HCT116 (cell line): ENCODE measurements at regions of chr5 and their contacts with region 1.

Region 1: GRCh38 chr5:154972476-154973080 is 31.7 kb downstream of the MRPL22 start:
- DNase-seq: peak; percentile 35
- ATAC-seq: peak; percentile 82
- H3K4me3 ChIP-seq: no peak overlapping the region
- H3K27ac ChIP-seq: no peak overlapping the region
- H3K4me1 ChIP-seq: no peaks in the 10 kb centered on the region
- H3K27me3 ChIP-seq: no peaks in the 10 kb centered on the region
- CTCF ChIP-seq: peak; percentile 64 to 73 (median 64); a peak in 5 of 6 replicates
- POLR2A ChIP-seq: no peak
- RAD21 ChIP-seq: peak; percentile 76

Region 2: DNA sequence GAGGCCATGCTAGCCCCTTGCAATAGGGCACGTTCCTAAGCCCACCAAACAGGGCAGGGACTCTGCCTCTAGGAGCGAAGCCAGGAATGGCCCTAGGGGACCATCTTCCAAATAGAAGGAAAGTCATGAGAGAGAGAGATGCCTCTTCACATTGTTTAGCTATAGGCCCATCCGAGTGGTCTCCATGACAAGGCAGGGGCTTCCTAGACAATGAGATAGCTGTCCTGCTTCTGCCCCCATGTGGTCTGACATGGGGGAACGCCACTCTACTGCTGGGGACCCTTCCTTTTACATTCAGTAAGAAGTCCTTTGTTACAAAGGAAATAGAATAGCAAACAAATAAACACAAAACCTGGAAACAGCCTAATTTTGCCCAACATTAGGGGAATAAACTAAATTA is 23.1 kb after region 1 on chr5:
- CTCF ChIA-PET with region 1: interaction called, 13 read pairs
- POLR2A ChIA-PET with region 1: no interaction called
- RAD21 ChIA-PET with region 1: no interaction called
- intact Hi-C with region 1: no loop called
- DNase-seq: no peak
- ATAC-seq: no peak
- H3K4me3 ChIP-seq: no peak overlapping the region
- H3K27ac ChIP-seq: no peak overlapping the region
- H3K4me1 ChIP-seq: peaks cover 0 to 10% of the 10 kb centered on the region in 2 experiments; a peak in 1 of 4 replicates
- H3K27me3 ChIP-seq: no peaks in the 10 kb centered on the region
- CTCF ChIP-seq: peak in 2 of 3 experiments; percentile 26; a peak in 2 of 6 replicates
- POLR2A ChIP-seq: no peak
- RAD21 ChIP-seq: no peak

Region 3: DNA sequence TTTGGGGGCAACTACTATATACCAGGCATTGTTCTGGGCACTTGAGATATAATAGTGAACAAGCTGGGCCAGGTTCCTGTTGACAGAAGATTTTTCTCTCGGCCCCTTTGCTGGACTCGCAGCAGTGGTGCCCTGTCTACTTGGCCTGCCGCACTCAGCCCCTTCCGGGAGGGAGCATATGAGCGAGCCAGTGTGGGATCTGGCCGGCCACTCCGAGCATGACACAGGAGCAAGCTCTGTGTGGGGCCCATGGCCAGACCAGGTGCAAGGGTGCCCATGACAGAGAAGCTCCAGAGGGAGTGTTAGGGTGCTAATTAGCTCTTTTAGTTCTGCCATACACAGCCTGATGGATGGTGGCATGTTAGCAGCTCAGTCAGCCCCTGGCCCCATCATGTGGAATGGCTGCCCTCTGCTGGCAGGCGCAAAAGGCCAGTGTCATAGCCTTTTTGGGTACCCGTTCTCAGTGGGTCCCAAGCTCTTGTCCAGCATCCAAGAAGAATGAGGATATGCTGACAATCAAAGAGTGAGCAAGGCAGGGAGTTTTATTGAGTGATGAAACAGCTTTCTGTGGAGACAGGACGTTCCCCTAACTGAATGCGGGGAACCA is 31.7 kb after region 1 on chr5:
- CTCF ChIA-PET with region 1: interaction called, 36 read pairs
- POLR2A ChIA-PET with region 1: interaction called, 4 read pairs
- RAD21 ChIA-PET with region 1: interaction called, 5 to 8 read pairs
- intact Hi-C with region 1: loop called (anchors 1 kb)
- DNase-seq: peak; percentile 31
- ATAC-seq: peak; percentile 89
- H3K4me3 ChIP-seq: no peak overlapping the region
- H3K27ac ChIP-seq: no peak overlapping the region
- H3K4me1 ChIP-seq: peaks cover 4 to 18% of the 10 kb centered on the region in 2 experiments; a peak in 2 of 4 replicates
- H3K27me3 ChIP-seq: no peaks in the 10 kb centered on the region
- CTCF ChIP-seq: peak; percentile 69 to 81 (median 75)
- POLR2A ChIP-seq: no peak
- RAD21 ChIP-seq: peak; percentile 90

Region 4: GRCh38 chr5:155027993-155028629 is 55.5 kb after region 1 on chr5:
- CTCF ChIA-PET with region 1: interaction called, 38 read pairs
- POLR2A ChIA-PET with region 1: no interaction called
- RAD21 ChIA-PET with region 1: interaction called in 1 of 2 experiments, 3 read pairs
- intact Hi-C with region 1: loop called (anchors 1 kb)
- DNase-seq: peak; percentile 27
- ATAC-seq: peak; percentile 96
- H3K4me3 ChIP-seq: no peak overlapping the region
- H3K27ac ChIP-seq: no peak overlapping the region
- H3K4me1 ChIP-seq: no peaks in the 10 kb centered on the region
- H3K27me3 ChIP-seq: no peaks in the 10 kb centered on the region; the same call in 1 of the 2 replicates
- CTCF ChIP-seq: peak; percentile 52 to 56 (median 54); a peak in 5 of 6 replicates
- POLR2A ChIP-seq: no peak
- RAD21 ChIP-seq: peak; percentile 78

Region 5: GRCh38 chr5:155728146-155728856 is 755.7 kb after region 1 on chr5:
- CTCF ChIA-PET with region 1: no interaction called
- POLR2A ChIA-PET with region 1: no interaction called
- RAD21 ChIA-PET with region 1: no interaction called
- intact Hi-C with region 1: no loop called
- DNase-seq: no peak
- ATAC-seq: no peak
- H3K4me3 ChIP-seq: no peak overlapping the region
- H3K27ac ChIP-seq: no peak overlapping the region
- H3K4me1 ChIP-seq: no peaks in the 10 kb centered on the region
- H3K27me3 ChIP-seq: no peaks in the 10 kb centered on the region
- CTCF ChIP-seq: no peak
- POLR2A ChIP-seq: no peak
- RAD21 ChIP-seq: no peak

Region 6: GRCh38 chr5:156824800-156825199 is 1852.2 kb after region 1 on chr5:
- CTCF ChIA-PET with region 1: no interaction called
- POLR2A ChIA-PET with region 1: no interaction called
- RAD21 ChIA-PET with region 1: no interaction called
- intact Hi-C with region 1: loop called (anchors 10 kb)
- DNase-seq: peak; percentile 21
- ATAC-seq: no peak; the same call in 1 of the 2 replicates
- H3K4me3 ChIP-seq: no peak overlapping the region
- H3K27ac ChIP-seq: no peak overlapping the region
- H3K4me1 ChIP-seq: no peaks in the 10 kb centered on the region
- H3K27me3 ChIP-seq: 0 out of 2 replicates have a peak, but pooled peaks cover 4% of the 10 kb centered on the region
- CTCF ChIP-seq: peak in 2 of 3 experiments; percentile 6 to 45; a peak in 1 of 6 replicates
- POLR2A ChIP-seq: no peak
- RAD21 ChIP-seq: peak; percentile 51